SK-N-SH (cell line): ENCODE measurements at regions of chr12 and their contacts with region 1.

Region 1: GRCh38 chr12:53321074-53321814 is at the start of gene AAAS:
- DNase-seq: peak; percentile 97
- H3K4me3 ChIP-seq: peak within 1 kb of the TSS; percentile 69 to 88
- H3K27ac ChIP-seq: peak within 1 kb of the TSS; percentile 86 to 94
- H3K4me1 ChIP-seq: peaks cover 7 to 18% of the 10 kb centered on the region in 2 experiments; a peak in 3 of 4 replicates
- H3K27me3 ChIP-seq: no peaks in the 10 kb centered on the region
- CTCF ChIP-seq: peak; percentile 97
- EP300 ChIP-seq: no peak
- RAD21 ChIP-seq: peak; percentile 27
- polyA plus RNA-seq, gene AAAS: 64.9 and 70.6 TPM in 2 replicates

Region 2: DNA sequence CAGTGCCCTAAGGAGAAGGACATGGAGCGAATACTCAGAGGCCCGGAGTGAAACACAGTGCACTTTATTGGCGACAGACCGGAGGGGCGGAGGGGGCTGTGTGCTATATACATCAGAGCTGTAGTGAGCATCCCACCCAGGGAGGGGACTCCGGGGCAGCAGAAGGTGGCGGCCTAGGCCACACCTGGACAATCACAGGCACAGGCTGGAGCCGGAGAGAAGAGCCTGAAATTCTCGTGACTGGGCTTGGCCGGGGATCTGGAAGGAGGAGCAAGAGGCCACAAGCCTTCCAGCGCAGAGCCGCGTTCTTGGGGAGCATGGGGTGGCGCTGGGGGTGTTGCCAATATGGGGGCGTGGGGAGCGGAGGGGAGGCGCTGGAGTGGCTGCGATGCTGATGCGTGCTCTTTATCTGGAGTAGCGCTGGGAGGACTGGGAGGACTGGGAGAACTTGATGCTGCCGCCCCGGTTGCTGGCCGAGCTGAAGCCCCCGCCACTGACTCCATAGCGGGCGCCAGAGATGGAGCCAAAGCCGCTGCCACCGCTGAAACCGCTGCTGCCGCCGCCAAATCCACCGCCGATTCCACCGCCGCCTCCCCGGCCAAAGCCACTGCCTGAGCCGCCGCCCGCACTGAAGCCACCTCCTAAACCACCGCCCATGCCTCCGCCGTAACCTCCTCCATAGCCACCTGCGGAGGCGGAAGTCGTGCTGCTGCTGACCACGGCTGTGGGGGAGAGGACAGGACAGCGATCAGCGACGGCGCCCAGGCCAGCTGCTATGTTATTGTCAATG is 531.4 kb before region 1 on chr12:
- CTCF ChIA-PET with region 1: no interaction called
- POLR2A ChIA-PET with region 1: no interaction called
- DNase-seq: no peak
- H3K4me3 ChIP-seq: no peak overlapping the region
- H3K27ac ChIP-seq: no peak overlapping the region
- H3K4me1 ChIP-seq: no peaks in the 10 kb centered on the region
- H3K27me3 ChIP-seq: peaks cover 18% of the 10 kb centered on the region; the same call in 1 of the 2 replicates
- CTCF ChIP-seq: no peak
- EP300 ChIP-seq: no peak
- RAD21 ChIP-seq: no peak

Region 3: DNA sequence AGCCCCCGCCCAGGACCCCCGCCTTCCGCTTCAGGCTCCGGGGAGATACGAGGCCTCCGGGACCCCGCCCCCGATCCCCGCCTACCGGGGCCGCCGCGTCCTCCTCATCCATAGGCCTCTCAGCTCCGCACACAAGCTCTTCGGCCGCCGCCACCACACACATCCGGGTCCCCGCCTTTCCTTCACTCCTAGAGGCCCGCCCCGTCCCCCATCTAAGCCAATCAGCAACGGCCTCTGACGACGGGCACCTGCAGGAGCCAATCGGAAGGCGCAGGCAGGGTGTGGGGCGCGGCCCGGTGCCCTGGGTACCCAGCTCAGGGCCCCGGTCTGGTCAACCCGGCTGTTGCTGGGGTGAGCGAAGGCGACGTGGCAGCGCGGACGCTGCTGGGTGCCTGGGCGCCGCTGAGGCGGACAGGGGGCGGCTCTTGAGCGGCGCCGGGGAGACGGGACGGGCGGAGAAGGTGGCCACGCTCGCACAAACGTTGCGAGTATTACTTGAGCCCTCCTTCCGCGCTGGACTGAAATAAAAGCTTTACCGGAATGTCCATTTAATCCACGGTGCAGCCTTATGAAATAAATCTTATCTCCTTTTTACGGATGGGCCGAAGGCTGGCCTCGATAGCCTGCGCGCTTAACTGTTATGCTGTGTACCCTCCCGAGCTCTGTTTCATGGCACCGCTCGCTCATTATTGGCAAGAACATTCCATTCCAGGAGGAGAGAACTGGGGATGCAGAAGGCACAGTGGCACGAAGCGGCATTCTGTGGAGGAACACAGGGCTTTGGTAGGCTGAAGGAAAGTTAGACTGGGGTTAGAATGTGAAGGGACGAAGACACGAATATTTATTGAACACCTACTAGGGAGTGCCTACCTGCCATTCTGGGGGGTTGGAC is 241.8 kb before region 1 on chr12 and contains the start of gene SPRYD3:
- CTCF ChIA-PET with region 1: no interaction called
- POLR2A ChIA-PET with region 1: no interaction called
- DNase-seq: peak; percentile 100
- H3K4me3 ChIP-seq: peak within 1 kb of the TSS; percentile 55 to 72
- H3K27ac ChIP-seq: peak within 1 kb of the TSS; percentile 94 to 96
- H3K4me1 ChIP-seq: peaks cover 7 to 14% of the 10 kb centered on the region in 2 experiments; a peak in 2 of 4 replicates
- H3K27me3 ChIP-seq: no peaks in the 10 kb centered on the region
- CTCF ChIP-seq: no peak
- EP300 ChIP-seq: no peak; a peak in 1 of 4 replicates
- RAD21 ChIP-seq: no peak
- polyA plus RNA-seq, gene SPRYD3: 20.3 and 25.8 TPM in 2 replicates

Region 4: DNA sequence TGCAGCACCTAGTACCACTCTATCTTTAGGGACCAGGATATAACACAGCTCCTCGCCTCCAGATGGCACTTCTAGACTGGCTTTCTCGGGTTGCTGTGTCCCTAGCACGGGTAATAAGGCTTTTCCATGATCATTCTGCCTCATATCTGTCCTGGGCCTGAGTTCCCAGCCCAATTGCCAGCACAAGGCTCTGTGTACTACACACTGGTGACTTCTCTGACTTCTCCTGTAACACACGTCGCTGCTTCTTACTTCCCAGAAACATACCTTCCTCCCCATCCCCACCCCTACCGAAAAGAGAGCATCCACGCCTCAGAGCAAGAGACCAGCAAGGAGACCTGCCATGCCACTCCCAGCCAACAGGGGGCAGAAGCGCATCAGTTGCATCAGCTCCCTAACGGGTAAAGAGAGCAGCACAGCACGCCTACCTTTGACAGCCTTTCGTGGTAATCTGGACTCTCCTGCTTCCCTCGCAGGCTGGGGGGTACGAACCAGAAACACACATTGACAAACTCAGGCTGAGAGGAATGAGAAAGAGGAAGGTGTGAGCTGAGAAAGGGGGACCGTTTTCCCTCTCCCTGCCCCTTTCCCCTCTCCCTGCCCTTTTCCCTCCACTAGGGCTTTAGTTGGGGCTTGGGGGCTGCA is 161.9 kb before region 1 on chr12:
- CTCF ChIA-PET with region 1: interaction called, 10 read pairs
- POLR2A ChIA-PET with region 1: interaction called, 3 read pairs
- DNase-seq: peak; percentile 88
- H3K4me3 ChIP-seq: peak overlapping the region in 1 of 2 experiments; percentile 4; a peak in 1 of 4 replicates
- H3K27ac ChIP-seq: no peak overlapping the region
- H3K4me1 ChIP-seq: peaks cover 0 to 2% of the 10 kb centered on the region in 2 experiments; a peak in 2 of 4 replicates
- H3K27me3 ChIP-seq: no peaks in the 10 kb centered on the region
- CTCF ChIP-seq: peak; percentile 96
- EP300 ChIP-seq: no peak
- RAD21 ChIP-seq: peak; percentile 86

Region 5: GRCh38 chr12:53267999-53268647 is 53.1 kb before region 1 on chr12 and contains the start of gene ESPL1:
- CTCF ChIA-PET with region 1: interaction called, 13 read pairs
- POLR2A ChIA-PET with region 1: interaction called, 5 read pairs
- DNase-seq: peak; percentile 95
- H3K4me3 ChIP-seq: peak within 1 kb of the TSS; percentile 76
- H3K27ac ChIP-seq: peak within 1 kb of the TSS; percentile 5 to 20; a peak in 1 of 4 replicates
- H3K4me1 ChIP-seq: peaks cover 5 to 21% of the 10 kb centered on the region in 2 experiments; a peak in 2 of 4 replicates
- H3K27me3 ChIP-seq: no peaks in the 10 kb centered on the region
- CTCF ChIP-seq: peak; percentile 53
- EP300 ChIP-seq: no peak; a peak in 1 of 4 replicates
- RAD21 ChIP-seq: peak; percentile 69
- polyA plus RNA-seq, gene ESPL1: 6.9 and 8.6 TPM in 2 replicates

Region 6: GRCh38 chr12:53336181-53336681 is 15.0 kb after region 1 on chr12 and contains the start of gene SP7:
- CTCF ChIA-PET with region 1: interaction called, 46 read pairs
- POLR2A ChIA-PET with region 1: interaction called, 5 read pairs
- DNase-seq: peak; percentile 52
- H3K4me3 ChIP-seq: no peak within 1 kb of the TSS
- H3K27ac ChIP-seq: no peak within 1 kb of the TSS
- H3K4me1 ChIP-seq: peaks cover 0 to 8% of the 10 kb centered on the region in 2 experiments; a peak in 1 of 4 replicates
- H3K27me3 ChIP-seq: peaks cover 16% of the 10 kb centered on the region; the same call in 1 of the 2 replicates
- CTCF ChIP-seq: no peak
- EP300 ChIP-seq: no peak
- RAD21 ChIP-seq: no peak
- polyA plus RNA-seq, gene SP7: not detected in 2 replicates

Region 7: DNA sequence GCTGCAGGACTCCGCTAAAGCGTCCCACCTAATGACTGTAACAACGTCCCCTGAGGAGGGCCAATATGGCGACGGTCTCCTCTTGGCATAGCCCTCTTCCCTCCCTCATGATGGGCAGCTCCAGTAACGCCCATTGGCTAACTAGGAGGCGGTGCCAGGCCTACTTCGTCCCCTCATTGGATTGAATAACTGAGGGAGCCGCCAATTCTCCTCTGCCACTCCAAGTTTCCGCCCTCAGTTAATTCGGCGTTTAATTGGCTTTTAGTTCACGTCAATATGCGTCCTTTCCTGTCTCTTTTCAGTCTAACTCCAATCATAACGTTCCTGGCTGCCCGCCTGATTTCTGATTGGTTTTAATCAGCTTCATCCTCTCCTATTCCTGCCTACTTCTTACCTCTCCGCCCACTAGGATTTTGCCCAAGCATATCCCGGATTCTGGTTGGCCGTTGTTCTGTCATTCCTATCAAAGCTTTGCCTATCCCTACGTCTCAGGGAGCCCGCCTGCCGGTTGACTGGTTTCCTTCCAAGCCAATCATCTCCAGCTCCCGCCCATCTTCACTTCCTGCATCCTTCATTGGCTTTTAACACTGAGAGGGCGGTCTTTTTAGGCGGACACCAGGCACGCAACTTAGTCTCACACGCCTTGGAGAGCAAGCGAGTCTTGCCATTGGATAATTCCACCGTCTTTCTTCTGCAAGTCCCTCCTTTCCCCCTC is 58.3 kb after region 1 on chr12:
- CTCF ChIA-PET with region 1: interaction called, 16 read pairs
- POLR2A ChIA-PET with region 1: interaction called, 16 read pairs
- DNase-seq: peak; percentile 91
- H3K4me3 ChIP-seq: peak overlapping the region; percentile 52 to 59
- H3K27ac ChIP-seq: peak overlapping the region; percentile 89 to 96
- H3K4me1 ChIP-seq: peaks cover 29 to 32% of the 10 kb centered on the region in 2 experiments
- H3K27me3 ChIP-seq: no peaks in the 10 kb centered on the region
- CTCF ChIP-seq: no peak
- EP300 ChIP-seq: no peak
- RAD21 ChIP-seq: no peak

Region 8: GRCh38 chr12:53476769-53477209 is 155.5 kb after region 1 on chr12:
- CTCF ChIA-PET with region 1: interaction called, 12 read pairs
- POLR2A ChIA-PET with region 1: no interaction called
- DNase-seq: peak; percentile 67
- H3K4me3 ChIP-seq: no peak overlapping the region
- H3K27ac ChIP-seq: peak overlapping the region; percentile 7 to 21; a peak in 3 of 4 replicates
- H3K4me1 ChIP-seq: peaks cover 2 to 5% of the 10 kb centered on the region in 2 experiments; a peak in 2 of 4 replicates
- H3K27me3 ChIP-seq: no peaks in the 10 kb centered on the region
- CTCF ChIP-seq: peak; percentile 58
- EP300 ChIP-seq: no peak
- RAD21 ChIP-seq: peak; percentile 34; the same call in 1 of the 2 replicates